ENCODE measurements at regions of chr14 and their contacts with region 1.

Region 1: DNA sequence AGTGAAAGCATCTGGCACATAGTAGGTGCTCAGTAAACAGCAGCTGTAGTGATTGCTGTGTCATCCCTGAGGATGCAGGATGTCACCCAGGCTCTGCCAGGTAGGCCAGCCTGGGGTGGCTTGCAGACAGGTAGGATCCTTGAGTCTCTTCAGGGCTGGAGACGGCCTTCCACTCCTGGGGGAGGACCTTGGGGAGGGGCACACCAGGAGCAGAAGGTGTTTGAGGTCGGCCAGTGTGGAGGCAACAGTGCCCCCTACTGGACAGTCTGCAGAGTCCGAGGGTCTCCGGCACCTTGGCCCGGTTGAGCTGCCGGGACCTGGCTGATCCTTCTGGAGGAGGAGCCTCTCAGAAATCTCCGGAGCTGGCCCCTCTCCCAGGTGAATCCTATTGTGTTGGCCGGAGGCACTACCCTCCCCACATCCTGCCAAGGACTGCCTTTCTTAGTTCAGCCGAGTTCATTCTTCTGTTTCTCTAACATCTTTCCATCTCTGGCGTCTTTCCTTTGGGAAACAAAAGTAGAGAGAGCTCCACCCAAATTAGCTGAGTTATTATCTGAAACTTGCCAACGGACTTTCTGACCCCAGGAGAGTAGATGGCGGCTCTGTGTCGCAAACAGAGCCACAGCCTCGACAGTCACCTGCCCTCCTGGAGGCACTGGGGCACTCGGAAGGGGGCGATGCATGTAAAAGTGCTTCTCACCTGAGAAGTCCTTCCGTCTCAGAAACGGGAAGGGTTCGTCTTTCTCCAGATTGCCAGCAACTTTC is 41.8 kb upstream of the CLMN start:
- DNase-seq: peak; percentile 34 to 49
- ATAC-seq: peak in 7 of 8 donors; percentile 45 to 71 (median 57)
- H3K4me3 ChIP-seq: no peak overlapping the region
- H3K27ac ChIP-seq: peak overlapping the region in 5 of 10 donors; percentile 5 to 56 (median 38)
- H3K4me1 ChIP-seq: peaks cover 0 to 42% (median 4%) of the 10 kb centered on the region in 9 donors
- H3K27me3 ChIP-seq: peaks cover 0 to 49% (median 27%) of the 10 kb centered on the region in 7 donors
- CTCF ChIP-seq: peak; percentile 25 to 79 (median 59)

Region 2: DNA sequence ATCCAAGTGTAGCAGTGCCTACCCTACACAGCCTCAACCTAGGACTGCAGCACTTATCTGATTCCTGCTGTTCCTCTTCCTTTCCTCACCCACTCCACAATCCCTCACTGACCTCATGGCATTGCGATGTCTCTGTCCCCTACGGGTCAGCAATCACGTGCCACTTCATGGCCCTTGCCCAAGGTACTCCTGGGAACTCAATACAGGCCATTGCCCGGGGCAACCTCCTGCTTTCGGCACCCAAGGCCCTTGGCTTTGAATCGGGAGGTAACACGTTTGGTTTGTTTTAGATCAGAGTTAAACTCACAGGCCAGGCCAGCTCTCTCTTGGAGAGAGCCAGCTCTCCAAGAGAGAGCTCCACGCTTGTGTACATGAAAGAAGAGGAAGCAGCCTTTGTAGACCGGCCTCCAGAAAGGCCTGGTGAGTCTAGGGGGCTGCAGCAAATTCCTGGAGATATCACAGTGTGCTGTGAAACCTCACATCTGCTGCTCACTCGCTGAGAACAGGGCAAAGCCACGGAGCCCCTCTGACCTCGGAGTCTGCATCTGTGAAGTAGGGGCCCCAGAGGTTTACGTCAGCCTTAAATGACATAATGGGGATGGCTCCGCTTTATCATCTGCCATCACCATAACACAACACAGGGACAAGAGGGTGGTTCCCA is 54.0 kb before region 1 on chr14:
- intact Hi-C with region 1: no loop called
- DNase-seq: peak in 1 of 2 donors; percentile 34
- ATAC-seq: peak; percentile 48 to 71 (median 62)
- H3K4me3 ChIP-seq: no peak overlapping the region
- H3K27ac ChIP-seq: peak overlapping the region in 8 of 10 donors; percentile 33 to 72 (median 44)
- H3K4me1 ChIP-seq: peaks cover 0 to 85% (median 33%) of the 10 kb centered on the region in 9 donors
- H3K27me3 ChIP-seq: no peaks in the 10 kb centered on the region
- CTCF ChIP-seq: no peak

Region 3: DNA sequence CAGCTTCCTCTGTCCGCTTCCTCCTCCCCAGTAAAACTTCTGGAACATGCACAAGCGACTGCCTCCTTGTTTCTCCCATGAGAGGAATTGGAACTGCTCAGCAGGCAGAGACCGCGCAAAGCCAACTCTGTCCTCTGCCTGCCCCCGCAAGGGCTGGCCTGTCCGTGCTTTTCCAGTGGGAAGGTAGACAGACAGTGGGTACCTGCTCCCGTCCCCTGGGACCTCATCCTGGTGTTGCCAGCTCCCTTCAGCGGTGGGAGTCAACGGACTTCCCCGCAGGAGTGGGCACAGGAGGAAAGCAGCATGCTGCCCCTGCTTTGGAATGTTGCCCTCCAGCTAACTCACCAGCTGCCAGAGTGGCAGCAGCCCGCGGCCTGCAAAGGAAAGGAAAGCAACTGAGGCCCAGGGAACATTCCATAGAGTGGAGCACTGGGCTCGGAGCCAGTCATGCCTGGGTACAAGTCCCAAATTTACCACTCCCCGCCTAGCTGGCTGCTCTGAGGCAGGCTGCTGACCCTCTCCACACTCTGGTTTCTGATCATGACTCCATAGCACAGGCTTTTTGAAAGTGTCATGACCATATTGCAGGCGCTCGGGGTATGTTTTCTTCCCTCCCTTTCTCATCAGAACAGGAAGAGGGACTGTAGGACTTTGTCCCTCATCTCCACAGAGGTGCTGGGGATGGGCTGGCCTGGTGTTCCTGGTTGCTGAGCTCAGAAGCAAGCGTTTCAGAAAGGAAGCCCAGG is 47.3 kb after region 1 on chr14:
- intact Hi-C with region 1: loop called in 1 of 10 experiments (anchors 5 kb)
- DNase-seq: peak in 1 of 2 donors; percentile 29
- ATAC-seq: peak in 7 of 8 donors; percentile 24 to 75 (median 65)
- H3K4me3 ChIP-seq: no peak overlapping the region
- H3K27ac ChIP-seq: peak overlapping the region in 9 of 10 donors; percentile 56 to 78 (median 71)
- H3K4me1 ChIP-seq: peaks cover 6 to 40% (median 17%) of the 10 kb centered on the region in 9 donors
- H3K27me3 ChIP-seq: no peaks in the 10 kb centered on the region
- CTCF ChIP-seq: no peak

Measured in heart right ventricle (tissue), 16 donors.